ENCODE measurements at regions of chr1 and their contacts with region 1.

Region 1: GRCh38 chr1:84944767-84945486 is 51.9 kb upstream of the LPAR3 start:
- DNase-seq: peak; percentile 86 to 91 (median 87)
- H3K4me3 ChIP-seq: peak overlapping the region; percentile 61 to 99 (median 79)
- H3K4me3 Mint-ChIP-seq: peak overlapping the region; percentile 79 to 89
- H3K27ac ChIP-seq: peak overlapping the region; percentile 66 to 87
- H3K27ac Mint-ChIP-seq: peak overlapping the region; percentile 89 to 93 (median 92)
- H3K4me1 ChIP-seq: peaks cover 10 to 11% of the 10 kb centered on the region in 2 donors
- H3K4me1 Mint-ChIP-seq: peaks cover 15% of the 10 kb centered on the region
- H3K27me3 ChIP-seq: no peaks in the 10 kb centered on the region
- H3K27me3 Mint-ChIP-seq: peaks cover 1 to 6% (median 4%) of the 10 kb centered on the region in 3 donors
- CTCF ChIP-seq: peak; percentile 99

Region 2: DNA sequence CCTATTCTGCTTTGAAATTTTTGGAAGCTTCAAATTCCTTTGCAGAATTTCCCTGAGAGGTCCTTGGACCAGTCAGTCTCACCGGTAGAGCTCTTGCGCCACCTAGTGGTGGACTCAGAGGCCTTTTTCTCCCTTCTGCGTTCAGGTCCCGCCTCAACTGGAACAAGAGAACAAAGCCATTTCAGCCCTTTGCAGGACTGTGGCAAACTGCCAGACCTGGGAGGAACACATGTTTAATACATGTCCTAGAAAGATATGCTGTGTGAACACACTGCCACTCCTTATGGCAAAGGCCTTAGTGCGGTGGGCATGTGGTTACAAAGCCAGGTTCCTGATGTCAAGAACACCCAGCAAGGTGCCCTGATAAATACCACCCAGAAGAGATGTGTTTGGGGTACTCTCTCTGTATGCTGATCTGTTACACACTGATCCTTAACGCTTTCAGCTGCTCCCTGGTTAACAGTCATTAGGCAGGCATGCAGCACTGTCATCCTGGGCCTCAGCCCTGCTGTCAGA is 172.4 kb before region 1 on chr1:
- intact Hi-C with region 1: loop called in 1 of 2 experiments (anchors 5 kb)
- DNase-seq: peak; percentile 55 to 68 (median 67)
- H3K4me3 ChIP-seq: no peak overlapping the region
- H3K4me3 Mint-ChIP-seq: no peak overlapping the region
- H3K27ac ChIP-seq: no peak overlapping the region
- H3K27ac Mint-ChIP-seq: no peak overlapping the region
- H3K4me1 ChIP-seq: no peaks in the 10 kb centered on the region
- H3K4me1 Mint-ChIP-seq: no peaks in the 10 kb centered on the region
- H3K27me3 ChIP-seq: no peaks in the 10 kb centered on the region
- H3K27me3 Mint-ChIP-seq: peaks cover 4 to 5% (median 4%) of the 10 kb centered on the region in 3 donors
- CTCF ChIP-seq: peak; percentile 92

Region 3: DNA sequence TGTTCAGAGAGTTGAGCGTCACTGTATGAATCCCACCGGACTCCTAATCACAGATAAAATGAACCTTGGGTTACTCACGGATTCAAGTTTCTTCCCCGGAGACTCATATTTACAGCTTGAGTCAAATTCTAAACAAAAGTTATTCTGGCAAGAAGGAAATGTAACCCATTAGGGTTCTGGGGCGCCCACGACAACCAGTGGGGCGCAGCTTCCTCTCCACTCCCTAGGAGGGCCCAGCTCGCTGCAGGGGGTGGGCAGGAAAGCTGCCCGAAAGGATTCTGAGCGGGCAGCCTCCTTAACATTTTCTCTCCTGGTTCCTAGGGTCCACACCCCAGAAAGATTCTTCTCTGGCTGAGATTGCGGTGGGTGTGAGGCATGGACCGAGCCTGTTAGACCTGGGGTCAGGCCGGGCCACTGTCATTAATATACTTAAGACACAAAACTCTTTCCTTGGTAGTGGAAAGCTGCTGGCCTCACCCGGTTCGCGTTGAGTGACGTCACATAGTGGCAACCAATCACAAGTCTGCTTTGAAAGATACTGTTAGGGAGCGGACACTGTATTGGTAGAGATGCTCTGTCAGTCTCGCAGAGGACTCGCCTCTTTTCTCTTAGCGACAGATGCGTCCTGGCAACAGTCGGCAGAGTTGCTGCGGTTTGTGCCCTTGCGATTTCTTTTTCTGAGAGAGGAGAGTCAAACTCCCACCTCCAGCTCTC is 116.9 kb after region 1 on chr1:
- intact Hi-C with region 1: loop called in 1 of 2 experiments (anchors 5 kb)
- DNase-seq: peak; percentile 94 to 95 (median 94)
- H3K4me3 ChIP-seq: peak overlapping the region; percentile 36 to 74 (median 41)
- H3K4me3 Mint-ChIP-seq: peak overlapping the region; percentile 71 to 92
- H3K27ac ChIP-seq: peak overlapping the region in 1 of 2 donors; percentile 64
- H3K27ac Mint-ChIP-seq: peak overlapping the region; percentile 55 to 94 (median 79)
- H3K4me1 ChIP-seq: peaks cover 11 to 21% of the 10 kb centered on the region in 2 donors
- H3K4me1 Mint-ChIP-seq: peaks cover 23% of the 10 kb centered on the region
- H3K27me3 ChIP-seq: no peaks in the 10 kb centered on the region
- H3K27me3 Mint-ChIP-seq: peaks cover 0 to 6% (median 3%) of the 10 kb centered on the region in 3 donors
- CTCF ChIP-seq: no peak

Region 4: DNA sequence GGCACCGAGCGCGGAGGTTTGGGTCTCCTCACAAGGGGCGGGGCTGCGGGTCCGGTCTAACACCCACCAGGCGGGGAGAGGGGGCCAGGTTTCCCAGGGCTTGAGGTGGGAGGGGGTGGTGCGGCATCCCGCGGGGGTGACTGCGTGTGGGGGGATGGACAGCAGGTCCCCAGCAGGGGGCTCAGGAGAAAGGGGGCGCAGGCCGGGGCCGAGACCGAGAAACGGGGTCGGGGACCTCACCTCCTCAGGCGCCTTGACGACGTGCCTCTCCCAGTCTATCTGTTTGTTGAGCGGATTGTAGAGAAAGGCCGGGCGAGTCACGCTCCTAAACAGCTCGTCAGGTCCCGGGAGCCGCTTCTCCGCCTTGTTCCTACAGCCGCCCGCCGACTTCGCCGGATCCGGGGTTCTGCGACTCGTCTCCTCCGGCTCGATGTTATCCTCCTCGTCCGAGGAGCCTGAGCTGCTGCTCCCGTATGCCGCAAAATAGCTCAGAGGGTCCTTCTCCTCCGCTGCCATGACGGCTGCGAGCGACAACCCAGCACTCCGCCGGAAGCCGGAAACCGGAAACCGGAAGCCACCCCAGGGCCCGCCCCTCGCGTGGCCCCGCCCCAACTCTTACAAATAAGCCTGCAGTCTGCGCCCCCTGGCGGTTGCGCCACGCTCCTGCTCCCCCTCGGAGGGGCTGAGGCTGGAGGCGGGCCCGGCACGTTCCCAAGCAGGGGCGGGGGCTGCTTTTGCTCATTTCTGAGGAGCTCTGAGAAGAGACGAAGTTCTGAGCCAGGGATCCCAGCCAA is 314.4 kb after region 1 on chr1 and contains the start of gene C1orf52:
- intact Hi-C with region 1: loop called (anchors 2 to 5 kb)
- DNase-seq: peak; percentile 91 to 93 (median 91)
- H3K4me3 ChIP-seq: peak within 1 kb of the TSS; percentile 51 to 87 (median 63)
- H3K4me3 Mint-ChIP-seq: peak within 1 kb of the TSS; percentile 90 to 98
- H3K27ac ChIP-seq: peak within 1 kb of the TSS; percentile 62 to 89
- H3K27ac Mint-ChIP-seq: peak within 1 kb of the TSS; percentile 94 to 98 (median 96)
- H3K4me1 ChIP-seq: peaks cover 7 to 19% of the 10 kb centered on the region in 2 donors
- H3K4me1 Mint-ChIP-seq: peaks cover 22% of the 10 kb centered on the region
- H3K27me3 ChIP-seq: no peaks in the 10 kb centered on the region
- H3K27me3 Mint-ChIP-seq: no peaks in the 10 kb centered on the region
- CTCF ChIP-seq: peak; percentile 99
- polyA plus RNA-seq, gene C1orf52: 18.5 to 29.1 (median 19.7) TPM